Activated CD8-positive, alpha-beta T cell treated with anti-CD3 and anti-CD28 coated beads, Interleukin-2, amount 10 ng/mL, durations not matched to agents 7 days and 5 days (primary cell): ENCODE measurements at regions of chr7 and their contacts with region 1.

Region 1: DNA sequence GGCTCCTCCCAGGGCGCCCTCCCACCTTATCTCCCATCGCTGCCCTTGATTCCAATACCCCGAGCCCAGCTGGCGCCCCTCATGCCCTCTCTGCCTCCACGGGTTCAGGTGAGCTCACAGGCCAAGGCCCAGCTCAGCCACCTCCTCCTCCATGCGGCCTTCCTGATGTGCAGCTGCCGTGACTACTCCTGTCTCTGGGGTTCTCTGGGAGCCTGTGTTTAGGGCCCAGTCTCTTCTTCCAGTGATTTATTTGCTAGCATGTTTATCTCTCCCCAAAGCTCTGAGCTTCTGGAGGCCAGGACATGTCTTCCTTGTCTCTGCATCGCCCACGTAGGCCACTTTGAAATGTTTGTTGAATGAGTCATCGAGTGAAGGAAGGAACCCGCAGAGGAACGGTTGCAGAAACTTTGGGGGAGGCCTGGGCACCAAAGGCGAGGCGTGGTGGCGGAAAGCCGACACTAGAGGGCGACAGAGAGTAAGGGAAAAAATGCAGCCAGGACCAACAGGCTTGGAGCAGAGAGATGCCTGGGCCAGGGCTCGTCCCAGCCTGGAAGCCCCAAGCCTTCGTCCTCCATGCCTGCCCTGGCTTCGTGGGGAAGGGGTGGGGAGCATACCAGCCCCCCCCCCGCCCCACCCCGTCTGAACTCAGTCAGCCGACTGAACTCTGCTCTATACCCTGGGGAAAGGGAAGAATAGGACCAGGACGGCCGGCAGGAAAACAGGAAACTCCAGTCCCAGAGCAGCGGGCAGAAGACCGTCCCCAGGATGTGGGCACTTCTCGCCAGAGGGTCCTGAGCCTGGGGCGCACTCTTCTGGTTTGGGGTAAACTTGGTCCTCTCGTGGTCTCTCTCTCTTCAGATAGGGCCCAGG is 10.9 kb upstream of the HSPB1 start:
- DNase-seq: peak; percentile 91
- ATAC-seq: peak; percentile 88
- H3K4me3 Mint-ChIP-seq: no peak overlapping the region
- H3K27ac Mint-ChIP-seq: peak overlapping the region; percentile 72
- H3K4me1 Mint-ChIP-seq: peaks cover 15% of the 10 kb centered on the region
- H3K27me3 Mint-ChIP-seq: peaks cover 4% of the 10 kb centered on the region

Region 2: GRCh38 chr7:76179686-76180085 is 111.9 kb before region 1 on chr7:
- CTCF ChIA-PET with region 1: interaction called, 21 read pairs
- POLR2A ChIA-PET with region 1: no interaction called
- DNase-seq: no peak
- ATAC-seq: no peak
- H3K4me3 Mint-ChIP-seq: no peak overlapping the region
- H3K27ac Mint-ChIP-seq: no peak overlapping the region
- H3K4me1 Mint-ChIP-seq: peaks cover 5% of the 10 kb centered on the region
- H3K27me3 Mint-ChIP-seq: no peaks in the 10 kb centered on the region

Region 3: DNA sequence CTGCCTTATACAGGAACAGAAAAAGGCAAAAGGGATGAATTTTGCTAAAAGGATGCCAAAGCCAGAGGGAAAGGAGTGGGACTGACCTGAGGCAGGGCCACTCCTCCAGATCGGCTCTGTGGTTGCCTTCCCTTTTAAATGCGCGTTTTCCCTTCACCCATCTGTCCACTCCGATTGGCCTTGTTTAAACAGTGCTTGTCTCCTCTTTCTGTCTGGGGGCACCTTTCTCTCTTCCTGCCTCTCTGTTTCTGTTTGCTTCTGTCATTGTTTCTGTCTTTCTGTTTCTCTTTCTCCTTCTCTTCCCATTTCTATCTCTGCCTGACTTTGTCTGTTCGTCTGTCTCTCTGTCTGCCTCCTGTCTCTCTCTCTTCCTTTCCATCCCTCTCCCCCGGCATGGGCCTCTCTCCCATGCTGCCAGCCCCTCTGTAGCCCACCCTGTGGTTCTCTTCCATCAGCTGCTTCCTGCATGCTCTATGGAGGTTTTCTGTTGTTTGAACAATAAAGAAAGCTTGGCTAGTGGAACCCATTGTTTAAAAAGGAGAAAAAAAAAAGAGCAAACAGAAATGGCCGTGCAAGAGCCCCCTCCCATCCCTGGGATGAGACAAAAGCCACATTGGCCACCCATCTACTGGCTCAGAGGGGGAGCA is 18.6 kb before region 1 on chr7:
- CTCF ChIA-PET with region 1: interaction called, 29 read pairs
- POLR2A ChIA-PET with region 1: interaction called, 3 read pairs
- DNase-seq: no peak
- ATAC-seq: peak; percentile 37
- H3K4me3 Mint-ChIP-seq: peak overlapping the region; percentile 16
- H3K27ac Mint-ChIP-seq: peak overlapping the region; percentile 72
- H3K4me1 Mint-ChIP-seq: peaks cover 24% of the 10 kb centered on the region
- H3K27me3 Mint-ChIP-seq: peaks cover 18% of the 10 kb centered on the region

Region 4: GRCh38 chr7:76278540-76278939 is 13.0 kb before region 1 on chr7:
- CTCF ChIA-PET with region 1: interaction called, 29 read pairs
- POLR2A ChIA-PET with region 1: interaction called, 3 read pairs
- DNase-seq: no peak
- ATAC-seq: no peak
- H3K4me3 Mint-ChIP-seq: no peak overlapping the region
- H3K27ac Mint-ChIP-seq: no peak overlapping the region
- H3K4me1 Mint-ChIP-seq: peaks cover 20% of the 10 kb centered on the region
- H3K27me3 Mint-ChIP-seq: peaks cover 32% of the 10 kb centered on the region

Region 5: GRCh38 chr7:76302347-76303201 is 11.0 kb after region 1 on chr7 and contains the start of gene HSPB1:
- CTCF ChIA-PET with region 1: interaction called, 68 read pairs
- POLR2A ChIA-PET with region 1: interaction called, 4 read pairs
- DNase-seq: peak; percentile 61
- ATAC-seq: peak; percentile 43
- H3K4me3 Mint-ChIP-seq: peak within 1 kb of the TSS; percentile 90
- H3K27ac Mint-ChIP-seq: peak within 1 kb of the TSS; percentile 87
- H3K4me1 Mint-ChIP-seq: peaks cover 19% of the 10 kb centered on the region
- H3K27me3 Mint-ChIP-seq: peaks cover 9% of the 10 kb centered on the region
- total RNA-seq, gene HSPB1: 37.2 to 40.4 TPM